Naive thymus-derived CD4-positive, alpha-beta T cell (primary cell): ENCODE measurements at regions of chr9 and their contacts with region 1.

Region 1: DNA sequence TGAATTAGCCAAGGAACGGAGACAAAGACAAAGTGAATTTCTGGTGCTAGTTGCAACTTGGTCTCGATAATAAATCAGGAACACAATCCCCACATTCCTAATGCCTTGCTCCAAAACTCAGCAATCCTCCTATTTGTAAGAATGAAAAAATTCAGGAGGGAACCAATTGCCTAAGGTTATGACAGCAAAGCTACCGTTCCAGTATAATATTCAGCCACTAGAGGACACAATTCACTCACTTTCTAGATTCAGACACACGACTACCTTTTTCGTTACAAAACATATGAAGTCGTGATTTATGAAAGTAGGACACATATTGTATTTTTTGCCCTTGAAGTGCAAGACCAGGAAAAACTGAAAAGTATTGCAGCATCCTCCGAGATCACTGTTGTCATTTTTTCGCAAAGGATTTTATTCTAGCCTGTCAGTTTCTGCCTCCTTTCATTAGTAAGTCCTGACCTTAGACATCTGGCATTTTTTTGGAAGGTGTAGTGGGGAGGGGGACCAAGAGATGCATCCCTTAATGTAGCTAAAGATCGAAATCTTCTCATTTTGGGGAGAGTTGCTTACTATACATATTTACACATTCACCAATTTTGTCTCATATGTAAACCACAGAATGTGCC is 133.1 kb downstream of the DOCK8 start:
- DNase-seq: peak in 1 of 9 donors; percentile 7
- ATAC-seq: no peak
- H3K4me3 ChIP-seq: no peak overlapping the region
- H3K4me3 Mint-ChIP-seq: no peak overlapping the region
- H3K27ac ChIP-seq: no peak overlapping the region
- H3K27ac Mint-ChIP-seq: peak overlapping the region in 3 of 9 donors; percentile 0 to 67 (median 46)
- H3K4me1 ChIP-seq: peaks cover 0 to 8% of the 10 kb centered on the region in 2 donors
- H3K4me1 Mint-ChIP-seq: peaks cover 13 to 48% (median 36%) of the 10 kb centered on the region in 7 donors
- H3K27me3 ChIP-seq: no peaks in the 10 kb centered on the region
- H3K27me3 Mint-ChIP-seq: no peaks in the 10 kb centered on the region

Region 2: DNA sequence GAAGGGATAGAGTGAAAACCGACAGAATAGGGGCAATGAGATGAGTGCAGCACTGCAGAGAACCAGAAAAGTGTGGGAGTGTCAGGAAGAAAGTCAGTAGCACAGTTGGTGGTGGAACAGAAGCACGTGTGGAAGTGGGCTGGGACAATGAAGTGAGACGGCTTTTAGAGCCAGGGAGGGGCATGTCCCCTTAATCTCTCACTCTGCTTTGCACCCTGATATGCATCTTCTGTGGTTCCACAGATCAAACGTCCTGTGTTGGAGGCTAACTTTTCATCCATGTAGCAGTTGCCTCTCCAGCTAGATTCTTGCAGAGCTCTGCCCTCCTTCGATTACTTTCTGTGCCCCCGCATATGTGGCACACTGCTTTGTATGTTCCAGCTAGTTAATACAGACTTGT is 30.5 kb after region 1 on chr9:
- CTCF ChIA-PET with region 1: no interaction called
- POLR2A ChIA-PET with region 1: no interaction called
- intact Hi-C with region 1: loop called in 1 of 2 experiments (anchors 5 kb)
- DNase-seq: peak in 4 of 9 donors; percentile 4 to 21 (median 9)
- ATAC-seq: peak; percentile 58
- H3K4me3 ChIP-seq: no peak overlapping the region
- H3K4me3 Mint-ChIP-seq: peak overlapping the region in 3 of 10 donors; percentile 0 to 37 (median 3)
- H3K27ac ChIP-seq: peak overlapping the region; percentile 2
- H3K27ac Mint-ChIP-seq: peak overlapping the region; percentile 19 to 84 (median 74)
- H3K4me1 ChIP-seq: peaks cover 0 to 2% of the 10 kb centered on the region in 2 donors
- H3K4me1 Mint-ChIP-seq: peaks cover 6 to 17% (median 11%) of the 10 kb centered on the region in 7 donors
- H3K27me3 ChIP-seq: no peaks in the 10 kb centered on the region
- H3K27me3 Mint-ChIP-seq: no peaks in the 10 kb centered on the region

Region 3: DNA sequence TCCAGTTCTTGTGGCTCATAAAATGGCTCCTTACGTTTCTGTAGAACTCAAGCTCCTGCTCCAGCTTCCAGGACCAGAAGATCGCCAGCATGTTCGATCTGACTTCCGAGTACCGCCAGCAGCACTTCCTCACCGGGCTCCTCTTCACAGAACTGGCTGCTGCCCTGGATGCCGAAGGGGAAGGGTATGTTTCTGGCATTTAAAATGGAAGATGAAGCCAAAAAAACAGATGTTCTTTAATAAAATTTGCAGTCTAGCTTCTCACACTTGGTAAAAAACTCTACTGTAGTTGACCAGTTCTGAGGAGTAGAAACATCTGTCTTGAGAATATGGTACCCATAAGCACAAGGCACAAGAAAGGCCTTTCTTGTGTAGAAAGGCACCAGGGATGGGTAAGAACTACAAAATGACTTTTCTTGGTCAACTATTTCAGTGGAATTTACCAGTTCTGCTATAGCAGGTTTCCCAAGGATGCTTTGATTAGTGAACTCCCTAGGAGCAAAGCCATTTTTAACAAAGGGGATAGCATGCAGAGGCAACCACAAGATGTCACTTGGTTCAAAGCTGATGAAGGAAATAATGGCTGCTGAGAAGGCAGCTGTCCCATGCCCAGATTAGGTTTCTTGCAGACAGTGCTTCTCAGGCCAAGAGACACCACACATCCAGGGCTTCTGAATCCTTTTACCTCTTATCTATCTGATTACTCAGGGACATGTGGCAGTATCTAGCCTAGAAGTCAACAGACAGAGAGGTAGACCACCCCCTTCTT is 59.3 kb after region 1 on chr9:
- CTCF ChIA-PET with region 1: no interaction called
- POLR2A ChIA-PET with region 1: no interaction called
- intact Hi-C with region 1: no loop called
- DNase-seq: no peak
- ATAC-seq: no peak
- H3K4me3 ChIP-seq: no peak overlapping the region
- H3K4me3 Mint-ChIP-seq: no peak overlapping the region
- H3K27ac ChIP-seq: no peak overlapping the region
- H3K27ac Mint-ChIP-seq: peak overlapping the region in 1 of 9 donors; percentile 57
- H3K4me1 ChIP-seq: no peaks in the 10 kb centered on the region
- H3K4me1 Mint-ChIP-seq: peaks cover 0 to 8% (median 3%) of the 10 kb centered on the region in 7 donors
- H3K27me3 ChIP-seq: no peaks in the 10 kb centered on the region
- H3K27me3 Mint-ChIP-seq: no peaks in the 10 kb centered on the region

Region 4: GRCh38 chr9:806285-807156 is 458.7 kb after region 1 on chr9:
- CTCF ChIA-PET with region 1: no interaction called
- POLR2A ChIA-PET with region 1: no interaction called
- intact Hi-C with region 1: loop called in 1 of 2 experiments (anchors 1 kb)
- DNase-seq: peak in 4 of 9 donors; percentile 12 to 35 (median 29)
- ATAC-seq: peak; percentile 41
- H3K4me3 ChIP-seq: no peak overlapping the region
- H3K4me3 Mint-ChIP-seq: no peak overlapping the region
- H3K27ac ChIP-seq: no peak overlapping the region
- H3K27ac Mint-ChIP-seq: no peak overlapping the region
- H3K4me1 ChIP-seq: no peaks in the 10 kb centered on the region
- H3K4me1 Mint-ChIP-seq: no peaks in the 10 kb centered on the region
- H3K27me3 ChIP-seq: no peaks in the 10 kb centered on the region
- H3K27me3 Mint-ChIP-seq: peaks cover 5 to 27% (median 10%) of the 10 kb centered on the region in 5 donors